ENCODE measurements at regions of chrX and their contacts with region 1.

Region 1: GRCh38 chrX:21678048-21678612 is 20.0 kb upstream of the KLHL34 start:
- DNase-seq: peak; percentile 3 to 34
- H3K4me3 ChIP-seq: no peak overlapping the region
- H3K4me3 Mint-ChIP-seq: peak overlapping the region; percentile 74
- H3K27ac Mint-ChIP-seq: peak overlapping the region; percentile 94
- H3K4me1 ChIP-seq: peaks cover 35% of the 10 kb centered on the region
- H3K4me1 Mint-ChIP-seq: peaks cover 26% of the 10 kb centered on the region
- H3K27me3 ChIP-seq: no peaks in the 10 kb centered on the region
- H3K27me3 Mint-ChIP-seq: no peaks in the 10 kb centered on the region
- CTCF ChIP-seq: no peak

Region 2: GRCh38 chrX:21612154-21612553 is 66.0 kb before region 1 on chrX:
- CTCF ChIA-PET with region 1: no interaction called
- POLR2A ChIA-PET with region 1: no interaction called
- intact Hi-C with region 1: no loop called
- DNase-seq: no peak
- H3K4me3 ChIP-seq: no peak overlapping the region
- H3K4me3 Mint-ChIP-seq: no peak overlapping the region
- H3K27ac Mint-ChIP-seq: no peak overlapping the region
- H3K4me1 ChIP-seq: no peaks in the 10 kb centered on the region
- H3K4me1 Mint-ChIP-seq: no peaks in the 10 kb centered on the region
- H3K27me3 ChIP-seq: no peaks in the 10 kb centered on the region
- H3K27me3 Mint-ChIP-seq: no peaks in the 10 kb centered on the region
- CTCF ChIP-seq: no peak

Region 3: DNA sequence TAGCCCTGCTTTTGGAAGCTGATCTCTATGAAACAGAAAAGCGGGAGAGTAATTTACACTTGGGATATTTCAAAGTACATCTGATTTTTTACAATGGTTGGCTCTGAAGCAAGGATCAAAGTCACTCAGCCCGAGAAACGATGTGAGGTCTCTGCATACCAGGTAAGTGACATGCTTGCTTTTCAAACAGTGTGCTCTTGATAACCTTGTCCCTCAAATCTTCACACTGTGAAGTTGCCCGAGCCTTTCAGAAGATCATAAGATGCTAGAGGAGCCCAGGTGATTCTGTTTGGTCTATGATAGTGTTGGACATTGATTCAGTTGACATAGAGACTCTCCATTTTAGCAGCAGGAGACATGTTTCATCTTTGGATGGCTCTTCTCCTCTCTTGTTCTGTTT is 27.1 kb after region 1 on chrX:
- CTCF ChIA-PET with region 1: no interaction called
- POLR2A ChIA-PET with region 1: no interaction called
- intact Hi-C with region 1: loop called (anchors 1 kb)
- DNase-seq: peak; percentile 52 to 69
- H3K4me3 ChIP-seq: no peak overlapping the region
- H3K4me3 Mint-ChIP-seq: peak overlapping the region; percentile 19
- H3K27ac Mint-ChIP-seq: peak overlapping the region; percentile 79
- H3K4me1 ChIP-seq: peaks cover 23% of the 10 kb centered on the region
- H3K4me1 Mint-ChIP-seq: peaks cover 8% of the 10 kb centered on the region
- H3K27me3 ChIP-seq: no peaks in the 10 kb centered on the region
- H3K27me3 Mint-ChIP-seq: no peaks in the 10 kb centered on the region
- CTCF ChIP-seq: no peak

Region 4: DNA sequence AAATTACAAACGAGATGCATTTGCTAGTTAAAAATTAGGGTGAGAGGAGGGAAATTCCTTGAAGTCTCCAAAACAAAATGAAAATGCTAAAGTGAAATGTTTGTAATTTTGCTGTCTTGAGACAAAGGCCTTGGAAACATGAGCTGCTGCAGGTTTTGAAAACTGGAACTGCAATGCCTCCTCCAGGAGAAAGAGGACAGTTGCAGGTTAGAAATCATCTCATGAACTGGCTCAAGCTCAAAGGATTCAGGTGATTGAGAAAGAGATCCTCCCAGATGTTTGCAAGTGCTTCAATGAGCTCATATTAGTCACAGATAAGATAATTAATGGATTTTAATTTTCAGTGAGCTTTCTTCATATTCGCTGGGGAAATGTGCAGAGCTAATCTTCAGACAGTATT is 47.4 kb after region 1 on chrX:
- CTCF ChIA-PET with region 1: interaction called, 10 read pairs
- POLR2A ChIA-PET with region 1: no interaction called
- intact Hi-C with region 1: loop called (anchors 5 kb)
- DNase-seq: peak; percentile 37 to 44
- H3K4me3 ChIP-seq: no peak overlapping the region
- H3K4me3 Mint-ChIP-seq: no peak overlapping the region
- H3K27ac Mint-ChIP-seq: no peak overlapping the region
- H3K4me1 ChIP-seq: peaks cover 26% of the 10 kb centered on the region
- H3K4me1 Mint-ChIP-seq: no peaks in the 10 kb centered on the region
- H3K27me3 ChIP-seq: no peaks in the 10 kb centered on the region
- H3K27me3 Mint-ChIP-seq: no peaks in the 10 kb centered on the region
- CTCF ChIP-seq: peak; percentile 46 to 52

Region 5: DNA sequence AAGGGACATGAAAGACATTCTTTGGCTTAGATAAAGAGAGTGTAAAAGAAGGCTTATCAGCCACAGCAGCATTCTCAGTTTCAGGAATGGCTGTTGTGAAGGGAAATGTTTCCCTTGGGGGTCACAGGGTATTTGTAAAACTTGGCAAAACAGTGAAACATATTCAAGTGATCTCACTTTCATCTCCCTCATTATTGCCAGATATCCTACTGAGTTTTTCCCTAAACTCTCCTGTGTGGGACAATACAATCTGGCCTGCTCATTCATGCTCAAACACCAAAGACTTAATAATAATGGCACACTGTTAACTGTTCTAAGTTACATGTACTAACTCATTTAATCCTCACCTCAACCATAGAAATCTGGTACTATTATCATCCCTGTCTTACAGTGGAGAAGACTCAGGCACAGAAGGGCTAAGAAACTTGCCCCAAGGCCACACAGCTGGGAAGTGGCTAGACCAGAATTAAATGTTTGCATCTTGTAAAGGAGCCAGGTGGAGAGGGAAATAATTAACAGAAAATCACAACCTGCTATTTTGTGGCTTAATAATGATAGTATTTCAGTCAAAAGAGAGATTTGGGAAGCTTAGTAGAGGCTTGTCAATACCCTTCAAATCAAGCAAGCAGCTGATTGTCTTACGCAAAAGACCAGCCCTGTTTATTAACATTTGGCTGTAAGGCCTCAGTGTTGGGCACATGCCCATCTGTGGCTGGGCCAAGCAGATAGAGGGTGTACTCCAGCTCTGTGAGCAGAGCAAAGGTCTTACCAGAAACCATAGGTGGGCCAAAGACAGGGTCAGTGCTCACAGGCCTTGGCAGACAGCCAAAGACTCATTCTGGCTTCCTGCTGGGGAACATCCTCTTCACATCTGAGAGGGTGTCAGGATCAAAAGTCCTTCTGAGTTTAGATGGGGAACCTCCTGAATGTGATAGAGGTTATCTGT is 62.5 kb after region 1 on chrX:
- CTCF ChIA-PET with region 1: no interaction called
- POLR2A ChIA-PET with region 1: no interaction called
- intact Hi-C with region 1: loop called (anchors 2 kb)
- DNase-seq: peak; percentile 39 to 48
- H3K4me3 ChIP-seq: no peak overlapping the region
- H3K4me3 Mint-ChIP-seq: peak overlapping the region; percentile 28
- H3K27ac Mint-ChIP-seq: peak overlapping the region; percentile 77
- H3K4me1 ChIP-seq: peaks cover 68% of the 10 kb centered on the region
- H3K4me1 Mint-ChIP-seq: peaks cover 15% of the 10 kb centered on the region
- H3K27me3 ChIP-seq: no peaks in the 10 kb centered on the region
- H3K27me3 Mint-ChIP-seq: no peaks in the 10 kb centered on the region
- CTCF ChIP-seq: no peak

Region 6: DNA sequence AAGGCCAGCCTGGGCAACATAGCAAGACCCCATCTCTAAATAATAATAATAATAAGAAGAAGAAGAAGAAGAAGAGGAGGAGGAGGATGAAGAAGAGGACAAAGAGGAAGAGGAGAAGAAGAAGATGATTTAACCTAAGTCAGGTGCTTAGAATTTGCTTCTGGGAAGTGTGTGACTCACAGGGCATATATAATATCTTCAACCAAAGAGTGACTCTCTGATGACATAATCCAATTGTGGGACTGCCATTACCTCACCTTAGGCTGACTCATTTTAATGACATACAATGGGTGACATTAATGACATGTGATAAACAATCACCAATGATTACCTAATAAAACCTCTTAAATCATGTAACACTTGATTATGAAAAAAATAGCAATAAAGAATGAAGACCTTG is 128.6 kb after region 1 on chrX:
- CTCF ChIA-PET with region 1: no interaction called
- POLR2A ChIA-PET with region 1: no interaction called
- intact Hi-C with region 1: no loop called
- DNase-seq: no peak
- H3K4me3 ChIP-seq: no peak overlapping the region
- H3K4me3 Mint-ChIP-seq: no peak overlapping the region
- H3K27ac Mint-ChIP-seq: no peak overlapping the region
- H3K4me1 ChIP-seq: peaks cover 20% of the 10 kb centered on the region; the same call in 1 of the 2 replicates
- H3K4me1 Mint-ChIP-seq: no peaks in the 10 kb centered on the region
- H3K27me3 ChIP-seq: no peaks in the 10 kb centered on the region
- H3K27me3 Mint-ChIP-seq: no peaks in the 10 kb centered on the region
- CTCF ChIP-seq: no peak

Region 7: DNA sequence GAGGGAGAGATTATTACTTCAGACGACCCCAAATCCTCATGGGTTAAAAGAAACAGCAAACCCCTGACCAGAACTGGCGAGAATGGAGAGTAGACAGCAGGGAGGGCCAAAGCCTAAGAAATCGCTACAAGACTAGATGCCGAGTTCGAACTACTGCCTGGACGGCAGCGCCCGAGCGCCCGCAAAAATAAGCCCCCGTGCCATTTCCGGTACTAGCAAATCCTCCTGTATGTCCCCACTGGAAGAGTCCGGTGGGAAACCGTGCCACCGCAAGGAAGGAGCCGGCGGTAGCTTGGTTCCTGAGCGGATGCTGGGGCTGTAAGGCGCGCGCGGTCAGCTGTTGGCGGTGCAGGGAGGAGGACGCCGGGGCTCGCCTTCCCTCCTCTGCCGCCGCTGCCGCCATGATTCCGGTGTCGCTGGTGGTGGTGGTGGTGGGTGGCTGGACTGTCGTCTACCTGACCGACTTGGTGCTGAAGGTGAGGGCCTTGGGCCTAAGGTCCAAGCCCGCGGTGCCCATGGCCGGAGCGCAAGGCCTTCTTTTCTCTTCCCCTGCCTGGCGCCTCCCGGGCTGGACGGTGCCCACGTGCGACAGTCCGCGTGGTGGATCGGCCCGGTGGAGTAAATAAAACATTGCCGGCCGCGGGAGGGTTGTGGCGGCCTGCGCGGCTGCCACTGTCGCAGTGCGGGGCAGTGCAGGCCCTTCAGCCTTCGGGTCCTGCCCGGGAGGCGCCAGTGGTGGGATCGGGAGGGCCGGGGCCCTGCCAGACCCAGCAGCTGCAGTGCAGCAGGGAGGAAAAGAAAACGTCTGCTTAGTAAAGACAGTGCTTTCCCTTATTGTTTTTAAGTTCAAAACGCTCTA is 161.4 kb after region 1 on chrX and contains the start of gene MBTPS2:
- CTCF ChIA-PET with region 1: no interaction called
- POLR2A ChIA-PET with region 1: no interaction called
- intact Hi-C with region 1: loop called (anchors 10 kb)
- DNase-seq: peak; percentile 84
- H3K4me3 ChIP-seq: peak within 1 kb of the TSS; percentile 86
- H3K4me3 Mint-ChIP-seq: peak within 1 kb of the TSS; percentile 79
- H3K27ac Mint-ChIP-seq: peak within 1 kb of the TSS; percentile 87
- H3K4me1 ChIP-seq: peaks cover 10% of the 10 kb centered on the region
- H3K4me1 Mint-ChIP-seq: peaks cover 9% of the 10 kb centered on the region
- H3K27me3 ChIP-seq: no peaks in the 10 kb centered on the region
- H3K27me3 Mint-ChIP-seq: no peaks in the 10 kb centered on the region
- CTCF ChIP-seq: no peak
- total RNA-seq, gene MBTPS2: 21.7 and 22.0 TPM in 2 replicates

Measured in Caco-2 (cell line).